Endothelial cell of umbilical vein (primary cell): ENCODE measurements at regions of chr3 and their contacts with region 1.

Region 1: DNA sequence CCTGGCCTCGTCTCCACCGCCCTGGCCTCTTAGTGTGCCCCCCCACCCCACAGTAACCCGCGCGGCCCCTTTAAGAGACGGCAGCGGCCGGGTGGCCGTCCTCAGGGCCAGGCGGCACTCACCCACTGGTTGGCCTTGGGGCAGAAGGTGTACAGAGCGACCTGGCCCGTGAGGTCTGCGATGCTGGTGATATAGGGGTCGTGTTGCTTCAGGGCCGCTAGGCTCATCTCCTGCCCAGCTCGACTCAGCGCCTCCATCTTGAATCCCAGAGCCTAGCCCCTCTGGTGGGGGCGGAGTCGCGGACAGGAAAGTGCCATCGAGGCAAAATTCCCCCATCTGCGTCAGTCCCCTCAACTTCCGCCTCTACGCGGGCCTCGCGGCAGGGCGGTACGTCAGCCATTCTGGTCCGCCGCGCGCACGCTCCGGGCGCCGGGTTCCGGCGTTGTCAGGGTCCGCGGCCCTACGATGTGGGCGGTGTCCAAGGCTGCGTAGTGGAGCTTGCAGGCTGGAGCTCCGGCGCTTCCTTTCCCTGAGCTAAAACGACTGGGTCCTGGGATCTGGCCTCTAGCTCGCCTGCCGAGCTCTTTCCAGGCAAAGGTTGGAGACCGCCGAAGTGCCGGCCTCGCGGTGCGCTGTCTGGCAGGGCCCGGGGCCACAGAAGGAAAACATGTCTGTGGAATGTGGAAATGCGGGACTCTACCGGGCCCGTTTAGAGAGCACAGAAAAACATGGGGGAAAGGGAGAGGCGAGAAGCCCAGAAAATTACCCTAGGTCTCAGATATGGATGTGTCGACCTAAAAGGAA is at the start of gene DCP1A:
- DNase-seq: peak; percentile 99
- H3K4me3 ChIP-seq: peak within 1 kb of the TSS; percentile 94 to 96 (median 96)
- H3K27ac ChIP-seq: peak within 1 kb of the TSS; percentile 73
- H3K4me1 ChIP-seq: peaks cover 32% of the 10 kb centered on the region
- H3K27me3 ChIP-seq: no peaks in the 10 kb centered on the region
- CTCF ChIP-seq: no peak
- POLR2A ChIP-seq: peak; percentile 92
- total RNA-seq, gene DCP1A: 28.5 and 38.0 TPM in 2 replicates

Region 2: GRCh38 chr3:53891497-53892285 is 544.2 kb after region 1 on chr3 and contains the start of gene SELENOK:
- CTCF ChIA-PET with region 1: no interaction called
- POLR2A ChIA-PET with region 1: no interaction called
- dilution Hi-C with region 1: no loop called
- intact Hi-C with region 1: loop called (anchors 2 kb)
- DNase-seq: peak; percentile 99
- H3K4me3 ChIP-seq: peak within 1 kb of the TSS; percentile 90 to 96 (median 91)
- H3K27ac ChIP-seq: peak within 1 kb of the TSS; percentile 80
- H3K4me1 ChIP-seq: peaks cover 13% of the 10 kb centered on the region
- H3K27me3 ChIP-seq: peaks cover 5 to 9% of the 10 kb centered on the region in 2 experiments
- CTCF ChIP-seq: no peak
- POLR2A ChIP-seq: peak; percentile 81
- total RNA-seq, gene SELENOK: 30.4 and 35.2 TPM in 2 replicates